Psoas muscle (tissue), 8 donors: ENCODE measurements at regions of chr5 and their contacts with region 1.

Region 1: GRCh38 chr5:122415030-122415800 is 103.2 kb downstream of the SNCAIP start:
- DNase-seq: peak; percentile 20 to 46
- ATAC-seq: no peak
- H3K4me3 ChIP-seq: no peak overlapping the region
- H3K27ac ChIP-seq: no peak overlapping the region
- H3K4me1 ChIP-seq: no peaks in the 10 kb centered on the region
- H3K27me3 ChIP-seq: no peaks in the 10 kb centered on the region
- CTCF ChIP-seq: peak; percentile 32

Region 2: GRCh38 chr5:122192497-122193496 is 222.4 kb before region 1 on chr5:
- intact Hi-C with region 1: loop called in 1 of 2 experiments (anchors 10 kb)
- DNase-seq: no peak
- ATAC-seq: peak in 1 of 4 donors; percentile 50
- H3K4me3 ChIP-seq: no peak overlapping the region
- H3K27ac ChIP-seq: no peak overlapping the region
- H3K4me1 ChIP-seq: peaks cover 2% of the 10 kb centered on the region
- H3K27me3 ChIP-seq: peaks cover 0 to 2% (median 0%) of the 10 kb centered on the region in 3 donors
- CTCF ChIP-seq: peak; percentile 42

Region 3: GRCh38 chr5:123215933-123216702 is 800.9 kb after region 1 on chr5:
- intact Hi-C with region 1: no loop called
- DNase-seq: no peak
- ATAC-seq: no peak
- H3K4me3 ChIP-seq: no peak overlapping the region
- H3K27ac ChIP-seq: no peak overlapping the region
- H3K4me1 ChIP-seq: no peaks in the 10 kb centered on the region
- H3K27me3 ChIP-seq: no peaks in the 10 kb centered on the region
- CTCF ChIP-seq: no peak